Activated B cell treated with CpG ODN at 0.5 μM for 24 hours (primary cell): ENCODE measurements at regions of chr9 and their contacts with region 1.

Region 1: DNA sequence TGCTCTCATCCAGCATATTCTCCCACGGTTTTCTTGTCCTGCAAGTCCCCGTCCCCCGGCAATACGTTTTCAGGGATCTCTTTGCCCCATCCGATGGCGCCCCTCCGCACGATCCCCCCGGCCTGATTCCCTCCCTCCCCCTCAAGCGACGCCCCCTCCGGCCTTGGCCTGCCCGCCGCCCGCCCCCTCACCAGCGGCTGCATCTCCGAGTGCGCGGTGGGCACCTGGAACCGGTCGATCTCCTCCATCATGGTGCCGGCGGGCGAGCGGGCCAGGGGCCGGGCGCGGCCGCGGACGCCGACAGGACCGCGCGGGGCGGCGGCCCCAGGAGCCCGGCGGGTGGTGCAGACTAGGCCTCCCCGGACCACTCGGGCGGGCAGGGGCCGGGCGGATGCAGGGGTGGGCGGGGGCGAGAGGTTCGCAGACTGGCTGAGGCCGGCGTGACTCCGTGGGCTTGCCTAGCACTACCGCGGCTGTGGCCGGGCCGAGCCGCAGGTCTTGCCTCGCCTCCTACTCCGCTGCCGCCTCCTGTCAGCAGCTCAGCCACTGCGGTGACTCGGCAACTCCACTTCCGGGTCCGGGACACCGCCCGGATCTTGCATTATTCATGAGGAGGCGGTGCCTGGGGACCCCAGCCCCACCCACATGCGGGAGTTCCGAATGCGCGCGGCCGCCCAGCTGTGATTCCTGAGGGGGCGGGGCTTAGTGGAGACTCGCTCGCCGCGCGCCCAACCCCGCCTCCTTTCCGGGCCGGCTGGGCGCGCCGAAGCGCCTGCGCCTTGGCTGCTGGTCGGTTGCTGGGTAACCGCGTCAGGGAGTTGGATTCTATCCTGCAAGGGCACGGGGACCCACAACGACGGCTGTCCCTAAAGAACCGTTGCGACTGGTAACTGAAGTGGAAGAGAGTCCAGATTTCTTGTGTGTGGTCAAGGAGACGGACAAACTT is at the starts of genes DNAI1 and FAM219A:
- DNase-seq: peak; percentile 99
- ATAC-seq: peak; percentile 92
- H3K4me3 Mint-ChIP-seq: peak within 1 kb of the TSS; percentile 90
- H3K27ac Mint-ChIP-seq: peak within 1 kb of the TSS; percentile 68
- H3K4me1 Mint-ChIP-seq: peaks cover 34% of the 10 kb centered on the region
- H3K27me3 Mint-ChIP-seq: peaks cover 12% of the 10 kb centered on the region
- CTCF ChIP-seq: no peak
- total RNA-seq, gene DNAI1: not detected in 2 replicates
- total RNA-seq, gene FAM219A: 13.5 and 16.9 TPM in 2 replicates

Region 2: DNA sequence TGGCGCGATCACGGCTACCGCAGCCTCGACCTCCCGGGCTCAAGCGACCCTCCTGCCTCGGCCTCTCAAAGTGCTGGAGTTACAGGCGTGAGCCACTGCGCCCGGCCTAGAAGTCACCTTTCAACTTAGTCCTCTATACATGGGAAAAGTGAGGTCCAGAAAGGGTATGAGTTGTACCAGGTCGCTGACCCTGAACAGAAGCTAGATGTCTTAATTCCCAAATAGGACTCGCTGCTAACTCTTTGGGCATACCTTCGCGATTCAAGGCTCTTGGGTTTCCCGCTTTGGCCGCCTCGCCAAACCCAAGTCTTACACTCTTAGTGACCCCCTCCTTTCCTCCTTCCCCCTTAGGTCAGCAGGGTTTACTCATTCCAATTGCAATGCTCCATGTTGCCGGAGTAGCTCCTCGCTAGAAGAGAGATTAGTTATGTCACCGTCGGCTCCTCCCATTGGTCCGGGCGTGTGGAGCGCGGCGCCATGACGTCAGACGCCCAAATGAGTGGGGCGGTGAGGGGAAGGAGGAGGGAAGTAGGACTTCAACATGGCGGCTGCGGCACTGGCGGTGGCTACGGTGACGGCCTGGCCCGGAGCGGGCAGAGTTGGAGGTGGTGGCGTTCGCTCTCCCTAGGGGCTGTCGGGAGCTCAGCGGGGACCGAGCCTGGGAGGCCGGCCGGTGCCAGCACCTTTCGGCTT is 279.6 kb before region 1 on chr9 and contains the start of gene UBAP1:
- CTCF ChIA-PET with region 1: no interaction called
- POLR2A ChIA-PET with region 1: no interaction called
- intact Hi-C with region 1: loop called (anchors 5 kb)
- DNase-seq: peak; percentile 88
- ATAC-seq: peak; percentile 97
- H3K4me3 Mint-ChIP-seq: peak within 1 kb of the TSS; percentile 99
- H3K27ac Mint-ChIP-seq: peak within 1 kb of the TSS; percentile 96
- H3K4me1 Mint-ChIP-seq: peaks cover 20% of the 10 kb centered on the region
- H3K27me3 Mint-ChIP-seq: no peaks in the 10 kb centered on the region
- CTCF ChIP-seq: no peak
- total RNA-seq, gene UBAP1: 28.3 and 30.6 TPM in 2 replicates

Region 3: DNA sequence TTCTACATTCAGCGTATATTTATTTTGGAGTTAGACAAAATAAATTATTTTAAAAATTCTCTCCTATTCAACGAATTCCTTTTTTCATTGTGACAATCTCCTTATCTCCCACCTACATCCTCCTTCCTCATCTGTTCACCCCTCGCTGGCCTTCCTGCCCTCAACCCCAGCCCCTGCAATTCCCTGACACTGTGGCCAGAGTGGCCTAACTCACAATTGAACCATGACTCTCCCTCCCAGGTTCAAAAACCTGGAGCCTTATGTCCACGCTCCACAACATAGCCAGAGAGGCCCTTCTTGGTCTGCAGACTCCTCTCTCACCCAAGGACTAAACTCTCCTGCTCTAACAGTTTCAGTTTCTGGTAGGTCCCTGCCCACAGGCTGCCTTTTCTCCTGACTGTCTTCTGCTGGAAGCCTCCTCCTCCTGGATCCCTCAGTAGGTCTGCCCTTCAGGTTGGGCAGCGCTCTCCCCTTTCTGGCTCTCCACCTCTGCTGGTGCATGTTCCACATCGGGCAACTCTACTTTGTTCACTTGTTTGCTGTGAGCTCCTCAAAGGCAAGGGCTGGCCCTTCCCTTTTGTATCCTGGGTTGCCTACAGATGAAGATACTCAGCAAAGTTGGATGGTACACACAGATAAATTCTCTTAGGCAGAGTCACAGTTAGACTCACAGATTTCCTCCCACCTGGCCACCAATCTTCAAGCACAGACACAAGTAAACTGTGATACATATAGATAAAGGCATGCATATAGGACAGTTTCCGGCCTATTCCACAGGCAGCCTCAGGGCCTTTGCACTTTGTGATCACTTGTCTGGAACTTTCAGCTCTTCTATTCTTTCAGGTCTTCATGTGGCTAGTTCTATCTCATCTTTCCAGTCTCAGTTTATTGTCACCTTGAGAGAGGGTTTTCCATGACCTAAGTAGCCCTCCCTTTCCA is 61.7 kb before region 1 on chr9:
- CTCF ChIA-PET with region 1: no interaction called
- POLR2A ChIA-PET with region 1: no interaction called
- intact Hi-C with region 1: no loop called
- DNase-seq: no peak
- ATAC-seq: no peak
- H3K4me3 Mint-ChIP-seq: no peak overlapping the region
- H3K27ac Mint-ChIP-seq: no peak overlapping the region
- H3K4me1 Mint-ChIP-seq: no peaks in the 10 kb centered on the region
- H3K27me3 Mint-ChIP-seq: peaks cover 4% of the 10 kb centered on the region
- CTCF ChIP-seq: no peak

Region 4: GRCh38 chr9:34522971-34523797 is 64.9 kb after region 1 on chr9 and contains the start of gene ENHO:
- CTCF ChIA-PET with region 1: no interaction called
- POLR2A ChIA-PET with region 1: interaction called, 7 read pairs
- intact Hi-C with region 1: loop called (anchors 1 kb)
- DNase-seq: peak; percentile 93
- ATAC-seq: peak; percentile 98
- H3K4me3 Mint-ChIP-seq: peak within 1 kb of the TSS; percentile 66
- H3K27ac Mint-ChIP-seq: no peak within 1 kb of the TSS
- H3K4me1 Mint-ChIP-seq: peaks cover 9% of the 10 kb centered on the region
- H3K27me3 Mint-ChIP-seq: peaks cover 19% of the 10 kb centered on the region
- CTCF ChIP-seq: no peak
- total RNA-seq, gene ENHO: not detected in 2 replicates

Region 5: GRCh38 chr9:34665381-34666250 is 207.3 kb after region 1 on chr9:
- CTCF ChIA-PET with region 1: interaction called, 3 read pairs
- POLR2A ChIA-PET with region 1: interaction called, 4 read pairs
- intact Hi-C with region 1: loop called (anchors 1 kb)
- DNase-seq: peak; percentile 75
- ATAC-seq: peak; percentile 90
- H3K4me3 Mint-ChIP-seq: peak overlapping the region; percentile 88
- H3K27ac Mint-ChIP-seq: peak overlapping the region; percentile 87
- H3K4me1 Mint-ChIP-seq: peaks cover 11% of the 10 kb centered on the region
- H3K27me3 Mint-ChIP-seq: no peaks in the 10 kb centered on the region
- CTCF ChIP-seq: no peak